RWPE1 (cell line): ENCODE measurements at regions of chr9 and their contacts with region 1.

Region 1: GRCh38 chr9:23700359-23700758 is 125.7 kb downstream of the ELAVL2 start:
- DNase-seq: no peak
- H3K27ac ChIP-seq: no peak overlapping the region
- CTCF ChIP-seq: no peak

Region 2: GRCh38 chr9:23438299-23438907 is 262.0 kb before region 1 on chr9:
- CTCF ChIA-PET with region 1: no interaction called
- POLR2A ChIA-PET with region 1: no interaction called
- DNase-seq: no peak
- H3K27ac ChIP-seq: no peak overlapping the region
- CTCF ChIP-seq: no peak

Region 3: GRCh38 chr9:23658376-23659258 is 41.7 kb before region 1 on chr9:
- CTCF ChIA-PET with region 1: interaction called, 11 read pairs
- POLR2A ChIA-PET with region 1: no interaction called
- DNase-seq: no peak
- H3K27ac ChIP-seq: no peak overlapping the region
- CTCF ChIP-seq: no peak